Posterior vena cava (tissue), 2 donors: ENCODE measurements at regions of chr10 and their contacts with region 1.

Region 1: GRCh38 chr10:116721547-116722392 is 20.6 kb downstream of the HSPA12A start:
- DNase-seq: peak; percentile 67

Region 2: DNA sequence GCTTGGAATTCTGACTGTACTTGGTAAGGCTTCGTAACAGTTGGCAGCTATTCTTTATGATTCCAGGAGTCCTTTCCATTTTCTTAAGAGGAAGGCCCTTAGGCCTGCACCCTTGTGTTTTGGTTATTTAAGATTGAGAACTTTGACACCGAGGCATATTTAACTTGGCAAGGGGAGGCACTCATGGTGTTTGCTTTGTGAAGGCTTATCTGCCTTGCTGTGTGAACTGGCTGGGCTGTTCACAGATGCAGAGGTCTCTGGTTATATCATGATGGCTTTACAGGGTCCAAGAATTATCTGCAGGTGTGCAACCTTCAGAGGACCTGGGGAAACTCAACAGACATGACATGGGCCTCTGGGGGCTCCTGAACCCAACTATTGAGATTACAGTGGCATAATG is 131.8 kb before region 1 on chr10:
- intact Hi-C with region 1: no loop called
- DNase-seq: no peak

Region 3: GRCh38 chr10:116696919-116697318 is 24.9 kb before region 1 on chr10:
- intact Hi-C with region 1: loop called in 1 of 2 experiments (anchors 1 kb)
- DNase-seq: no peak

Region 4: GRCh38 chr10:116787893-116788665 is 66.3 kb after region 1 on chr10:
- intact Hi-C with region 1: no loop called
- DNase-seq: peak; percentile 95